SK-N-SH (cell line): ENCODE measurements at regions of chr17 and their contacts with region 1.

Region 1: GRCh38 chr17:50904521-50905459 is 38.6 kb upstream of the TOB1 start:
- DNase-seq: peak; percentile 90
- H3K4me3 ChIP-seq: no peak overlapping the region
- H3K27ac ChIP-seq: peak overlapping the region; percentile 61 to 92; a peak in 3 of 4 replicates
- H3K4me1 ChIP-seq: peaks cover 13 to 42% of the 10 kb centered on the region in 2 experiments
- H3K27me3 ChIP-seq: no peaks in the 10 kb centered on the region
- CTCF ChIP-seq: no peak; the same call in 1 of the 2 replicates
- EP300 ChIP-seq: peak in 1 of 2 experiments; percentile 54; a peak in 2 of 4 replicates
- RAD21 ChIP-seq: peak; percentile 77

Region 2: DNA sequence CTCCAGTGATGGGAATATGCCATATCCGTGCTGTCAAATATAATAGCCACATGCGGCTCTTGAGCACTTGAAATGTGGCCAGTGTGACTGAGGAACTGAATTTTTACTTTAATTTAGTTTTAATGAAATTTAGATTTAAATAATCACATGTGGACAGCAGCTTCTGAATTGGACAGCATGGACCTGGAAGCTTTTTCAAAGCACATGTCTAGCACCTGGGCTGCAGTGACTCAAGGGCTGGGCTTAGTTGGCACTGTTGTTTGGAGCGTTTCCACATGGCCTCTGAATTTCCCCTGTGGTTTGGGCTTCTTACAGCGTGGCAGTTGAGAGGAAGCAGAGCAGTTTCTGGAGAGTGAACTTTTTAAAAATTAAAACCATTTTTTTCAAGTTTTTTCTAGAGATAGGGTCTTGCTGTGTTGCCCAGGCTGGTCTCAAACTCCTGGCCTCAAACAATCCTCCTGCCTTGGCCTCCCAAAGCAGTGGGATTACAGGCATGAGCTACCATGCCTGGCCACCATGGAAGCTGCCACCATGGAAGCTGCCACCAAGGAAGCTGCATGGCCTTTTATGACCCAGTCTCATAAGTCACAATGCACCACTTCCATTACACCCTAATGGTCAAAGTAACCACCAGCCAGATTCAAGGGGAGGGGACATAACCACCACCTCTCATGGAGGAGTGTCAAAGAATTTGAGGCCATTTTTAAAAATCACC is 31.9 kb before region 1 on chr17:
- CTCF ChIA-PET with region 1: interaction called, 5 read pairs
- POLR2A ChIA-PET with region 1: interaction called, 106 read pairs
- DNase-seq: no peak
- H3K4me3 ChIP-seq: no peak overlapping the region
- H3K27ac ChIP-seq: peak overlapping the region in 1 of 2 experiments; percentile 84; a peak in 2 of 4 replicates
- H3K4me1 ChIP-seq: peaks cover 0 to 30% of the 10 kb centered on the region in 2 experiments; a peak in 2 of 4 replicates
- H3K27me3 ChIP-seq: no peaks in the 10 kb centered on the region
- CTCF ChIP-seq: no peak
- EP300 ChIP-seq: peak; percentile 16 to 39; a peak in 2 of 4 replicates
- RAD21 ChIP-seq: no peak

Region 3: DNA sequence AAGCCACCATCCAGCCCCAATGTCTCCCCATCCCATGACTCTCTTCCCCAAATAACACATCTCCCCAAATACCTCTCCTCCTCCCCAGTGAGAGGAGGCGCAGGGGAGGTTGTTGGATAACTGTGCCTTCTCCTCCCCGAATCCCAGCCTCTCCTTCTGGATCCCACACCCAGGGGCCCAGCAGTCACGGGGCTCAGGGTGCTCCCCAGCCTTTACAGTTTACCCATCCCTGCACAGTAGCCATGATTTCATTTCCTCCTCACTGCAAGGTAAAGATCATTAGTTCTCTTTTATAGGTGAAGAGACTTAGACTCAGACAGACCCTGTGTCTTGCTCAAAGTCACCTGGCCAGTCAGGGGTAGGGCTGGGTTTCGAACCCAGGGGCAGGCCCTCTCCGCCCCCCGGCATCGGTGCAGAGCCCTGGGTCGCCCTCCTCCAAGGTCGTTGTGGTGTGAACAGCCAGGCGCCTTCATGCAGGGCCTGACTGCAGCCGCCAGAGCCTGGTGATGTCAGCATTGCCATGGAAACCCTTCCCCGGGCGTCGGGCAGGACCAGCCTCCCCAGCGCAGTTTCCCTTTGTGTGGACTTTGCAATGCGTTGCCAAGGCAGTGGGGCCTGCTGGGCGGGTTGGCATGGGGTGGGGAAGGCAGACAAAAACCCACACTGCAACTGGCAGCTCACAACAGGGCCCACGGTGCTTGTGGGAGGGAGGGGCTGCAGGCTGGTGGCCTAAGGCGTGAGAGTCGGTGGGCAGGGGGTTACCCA is 14.7 kb after region 1 on chr17:
- CTCF ChIA-PET with region 1: interaction called, 17 read pairs
- POLR2A ChIA-PET with region 1: interaction called, 31 read pairs
- DNase-seq: peak; percentile 99
- H3K4me3 ChIP-seq: no peak overlapping the region
- H3K27ac ChIP-seq: peak overlapping the region; percentile 80 to 96
- H3K4me1 ChIP-seq: peaks cover 28 to 39% of the 10 kb centered on the region in 2 experiments
- H3K27me3 ChIP-seq: no peaks in the 10 kb centered on the region
- CTCF ChIP-seq: no peak
- EP300 ChIP-seq: peak in 1 of 2 experiments; percentile 68; a peak in 1 of 4 replicates
- RAD21 ChIP-seq: peak; percentile 43; the same call in 1 of the 2 replicates

Region 4: DNA sequence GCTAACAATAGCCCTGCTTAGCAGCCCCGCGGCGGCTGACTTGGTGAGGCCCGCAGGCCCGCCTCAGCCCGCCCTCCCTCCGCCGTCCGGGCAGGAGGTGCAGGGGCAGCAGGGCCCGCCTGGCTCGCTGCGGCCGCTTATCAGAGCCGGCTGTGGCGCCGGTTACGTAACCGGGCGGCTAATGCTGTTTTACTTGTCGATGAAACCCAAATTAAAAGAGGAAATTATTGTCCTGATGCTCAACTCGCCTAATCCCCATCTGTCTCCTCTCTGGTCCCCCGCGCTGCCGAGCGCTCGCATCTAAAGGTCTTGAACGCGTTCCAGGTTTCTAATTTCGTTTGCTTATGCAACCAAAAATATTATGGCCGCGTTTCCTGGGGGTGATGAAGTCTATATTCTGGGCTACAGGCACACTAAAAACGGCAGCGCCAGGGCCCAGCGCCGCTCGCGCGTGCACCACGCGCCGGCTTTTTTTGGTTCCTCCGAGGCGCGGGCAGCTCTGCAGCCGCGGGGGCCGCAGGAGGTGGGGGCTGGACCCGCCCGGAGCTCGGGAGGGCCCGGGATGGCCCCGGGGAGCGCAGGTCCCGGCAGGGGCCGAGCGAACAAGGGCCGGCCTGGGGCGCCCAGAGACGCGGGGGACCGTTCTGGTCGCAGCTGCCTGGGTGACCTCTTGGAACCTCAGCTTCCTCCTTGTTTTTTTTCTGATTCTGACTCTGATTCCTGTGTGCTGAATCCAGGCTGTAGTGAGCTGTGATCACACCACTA is 26.5 kb after region 1 on chr17:
- CTCF ChIA-PET with region 1: interaction called, 14 read pairs
- POLR2A ChIA-PET with region 1: interaction called, 15 read pairs
- DNase-seq: peak; percentile 95
- H3K4me3 ChIP-seq: peak overlapping the region; percentile 41 to 62
- H3K27ac ChIP-seq: peak overlapping the region; percentile 93 to 98
- H3K4me1 ChIP-seq: peaks cover 15 to 41% of the 10 kb centered on the region in 2 experiments
- H3K27me3 ChIP-seq: no peaks in the 10 kb centered on the region
- CTCF ChIP-seq: no peak
- EP300 ChIP-seq: peak in 1 of 2 experiments; percentile 45; a peak in 1 of 4 replicates
- RAD21 ChIP-seq: no peak; the same call in 1 of the 2 replicates

Region 5: DNA sequence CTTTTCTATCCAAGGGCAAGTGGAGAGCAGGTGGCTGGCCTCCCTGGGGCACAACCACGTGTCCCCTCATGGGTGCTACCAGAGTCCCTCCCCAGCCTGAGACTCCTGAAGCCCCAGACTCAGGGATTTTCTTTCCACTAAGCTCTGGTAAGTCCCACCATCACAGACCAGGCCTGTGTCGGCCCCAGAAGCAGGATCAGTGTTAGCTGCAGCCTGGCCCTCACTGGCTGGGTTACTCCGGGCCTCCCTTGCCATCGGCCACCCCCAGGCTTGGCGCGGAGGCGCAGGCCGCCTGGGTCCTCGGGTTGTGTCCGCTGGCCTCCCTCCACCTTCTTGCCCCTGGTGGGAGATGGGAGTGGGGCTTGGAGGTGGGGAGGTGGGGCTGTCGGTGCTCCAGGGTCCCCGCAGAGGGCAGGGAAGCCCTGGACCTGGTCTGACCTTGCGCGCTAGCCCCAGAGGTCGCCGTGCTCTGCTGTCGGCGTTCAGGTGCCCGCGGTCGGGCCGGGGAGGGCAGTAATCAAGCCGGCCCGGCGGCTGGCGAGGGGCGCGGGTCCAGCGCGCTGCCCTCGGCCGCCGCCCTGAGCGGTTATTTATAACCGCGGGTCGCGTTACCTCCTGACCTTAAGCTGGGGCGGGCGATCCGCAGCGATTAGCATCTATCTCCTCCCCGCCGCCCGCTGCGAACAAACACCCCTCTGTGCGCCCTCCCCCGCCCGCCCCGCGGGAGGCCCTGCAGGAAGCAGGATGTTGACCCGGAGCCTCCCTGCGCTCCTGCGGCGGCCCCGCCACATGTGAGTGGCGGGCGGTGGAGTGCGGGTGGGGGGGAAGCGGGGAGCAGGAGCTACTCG is 39.5 kb after region 1 on chr17:
- CTCF ChIA-PET with region 1: interaction called, 42 read pairs
- POLR2A ChIA-PET with region 1: interaction called, 25 read pairs
- DNase-seq: peak; percentile 92
- H3K4me3 ChIP-seq: peak overlapping the region; percentile 9 to 21; a peak in 3 of 4 replicates
- H3K27ac ChIP-seq: peak overlapping the region; percentile 25 to 85; a peak in 3 of 4 replicates
- H3K4me1 ChIP-seq: peaks cover 10 to 55% of the 10 kb centered on the region in 2 experiments; a peak in 3 of 4 replicates
- H3K27me3 ChIP-seq: no peaks in the 10 kb centered on the region
- CTCF ChIP-seq: no peak
- EP300 ChIP-seq: peak; percentile 29 to 44; a peak in 1 of 4 replicates
- RAD21 ChIP-seq: no peak

Region 6: GRCh38 chr17:50949989-50950881 is 45.4 kb after region 1 on chr17:
- CTCF ChIA-PET with region 1: interaction called, 72 read pairs
- POLR2A ChIA-PET with region 1: interaction called, 34 read pairs
- DNase-seq: peak; percentile 86
- H3K4me3 ChIP-seq: peak overlapping the region in 1 of 2 experiments; percentile 15; a peak in 1 of 4 replicates
- H3K27ac ChIP-seq: peak overlapping the region; percentile 81 to 82
- H3K4me1 ChIP-seq: peaks cover 43 to 81% of the 10 kb centered on the region in 2 experiments
- H3K27me3 ChIP-seq: no peaks in the 10 kb centered on the region
- CTCF ChIP-seq: peak; percentile 95
- EP300 ChIP-seq: peak in 1 of 2 experiments; percentile 33; a peak in 1 of 4 replicates
- RAD21 ChIP-seq: peak; percentile 95